ENCODE measurements at regions of chr4 and their contacts with region 1.

Region 1: DNA sequence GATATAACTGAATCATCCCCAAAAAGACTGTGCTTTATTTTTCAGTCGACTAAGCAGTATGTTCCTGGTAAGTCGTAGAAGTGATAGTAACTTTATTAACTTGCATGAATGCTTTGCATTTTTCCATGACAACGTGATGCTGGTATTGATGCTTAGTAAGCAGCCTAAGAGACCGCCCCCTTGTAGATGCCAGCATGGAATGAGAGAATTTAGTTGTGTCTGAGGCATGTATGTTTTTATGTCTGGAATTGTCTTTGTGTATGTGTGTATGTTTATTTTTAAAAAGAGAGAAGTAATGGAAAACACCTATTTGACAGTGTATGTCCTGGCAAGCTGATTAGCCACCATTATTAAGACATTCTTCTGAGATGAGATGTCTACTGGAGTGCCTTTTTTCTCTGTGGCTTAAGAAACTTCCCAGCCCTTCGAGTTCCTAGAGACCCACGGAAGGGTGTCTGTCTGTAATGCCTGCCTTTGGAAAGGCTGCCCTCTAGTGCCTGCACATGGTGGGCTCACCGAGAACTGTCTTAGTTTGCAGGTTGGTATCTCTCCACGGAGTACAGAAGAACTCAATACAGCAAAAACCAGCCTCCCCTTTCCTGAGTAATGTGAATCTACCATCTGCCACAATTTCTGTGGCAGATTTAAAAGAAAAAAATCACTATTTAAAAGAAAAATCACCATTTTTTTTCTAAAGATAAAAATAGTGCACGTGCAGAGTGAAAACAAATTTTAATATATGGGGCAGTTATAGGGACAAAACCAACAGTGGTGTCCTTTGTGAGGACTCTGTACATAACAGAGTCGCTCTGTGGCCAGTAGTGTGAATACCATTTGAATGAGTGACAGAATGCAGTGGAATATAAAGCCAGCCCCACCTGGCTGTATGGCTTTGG is 85.9 kb downstream of the AASDH start:
- DNase-seq: peak; percentile 64 to 81 (median 66)
- ATAC-seq: peak; percentile 99
- H3K4me3 ChIP-seq: no peak overlapping the region
- H3K27ac ChIP-seq: no peak overlapping the region
- H3K4me1 ChIP-seq: no peaks in the 10 kb centered on the region; a peak in 1 of 5 replicates
- H3K27me3 ChIP-seq: peaks cover 20 to 43% of the 10 kb centered on the region in 2 experiments; a peak in 4 of 5 replicates
- CTCF ChIP-seq: peak; percentile 85 to 90 (median 89)
- EP300 ChIP-seq: no peak
- POLR2A ChIP-seq: no peak
- RAD21 ChIP-seq: peak; percentile 88 to 91

Region 2: GRCh38 chr4:55742655-55743202 is 558.7 kb before region 1 on chr4:
- CTCF ChIA-PET with region 1: no interaction called
- POLR2A ChIA-PET with region 1: no interaction called
- in situ Hi-C with region 1: no loop called
- intact Hi-C with region 1: loop called (anchors 5 kb)
- DNase-seq: peak in 2 of 4 experiments; percentile 29 to 74
- ATAC-seq: peak; percentile 82
- H3K4me3 ChIP-seq: no peak overlapping the region
- H3K27ac ChIP-seq: no peak overlapping the region
- H3K4me1 ChIP-seq: peaks cover 7 to 8% of the 10 kb centered on the region in 2 experiments; a peak in 4 of 5 replicates
- H3K27me3 ChIP-seq: no peaks in the 10 kb centered on the region
- CTCF ChIP-seq: no peak
- EP300 ChIP-seq: no peak
- POLR2A ChIP-seq: no peak
- RAD21 ChIP-seq: no peak

Region 3: DNA sequence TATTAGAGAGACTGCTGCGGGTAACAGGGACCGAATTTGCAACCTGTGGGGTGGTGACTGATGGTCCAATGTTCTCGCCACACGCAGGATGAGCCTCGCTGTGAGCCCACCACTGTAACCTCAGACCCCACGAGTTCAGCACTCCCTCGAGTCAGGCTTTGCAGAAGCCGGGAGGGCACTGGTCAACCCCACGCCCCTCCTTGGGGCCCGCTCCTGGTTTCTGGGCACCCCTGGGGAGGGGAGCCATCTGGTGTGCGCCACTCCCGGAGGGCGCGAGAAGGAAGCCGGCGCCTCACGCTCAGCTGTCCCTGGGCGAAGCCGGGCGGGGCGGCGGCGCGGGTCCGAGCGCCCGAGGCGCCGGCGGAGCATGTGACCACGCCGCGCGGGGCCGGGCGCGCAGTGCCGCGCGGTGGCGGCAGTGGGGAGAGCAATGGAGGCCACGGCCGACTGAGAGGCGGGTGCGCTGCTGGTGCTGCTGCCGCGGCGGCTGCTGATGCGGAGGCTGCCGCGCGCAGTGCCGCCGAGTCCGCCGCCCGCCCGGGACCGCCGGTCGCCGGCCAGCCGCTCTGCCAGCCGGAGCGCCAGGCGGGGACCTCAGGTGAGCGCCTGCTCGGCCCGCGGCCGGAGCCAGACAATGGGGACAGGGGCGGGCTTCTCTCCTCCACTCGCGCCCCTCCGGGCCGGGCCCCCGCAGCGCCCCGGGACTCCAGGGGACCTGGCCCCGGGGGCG is 252.6 kb before region 1 on chr4:
- CTCF ChIA-PET with region 1: no interaction called
- POLR2A ChIA-PET with region 1: no interaction called
- in situ Hi-C with region 1: no loop called
- intact Hi-C with region 1: loop called (anchors 5 kb)
- DNase-seq: peak; percentile 60 to 75 (median 68)
- ATAC-seq: peak; percentile 98
- H3K4me3 ChIP-seq: peak overlapping the region; percentile 47
- H3K27ac ChIP-seq: no peak overlapping the region
- H3K4me1 ChIP-seq: peaks cover 0 to 16% of the 10 kb centered on the region in 2 experiments; a peak in 3 of 5 replicates
- H3K27me3 ChIP-seq: peaks cover 15 to 17% of the 10 kb centered on the region in 2 experiments
- CTCF ChIP-seq: peak in 2 of 3 experiments; percentile 62 to 76; a peak in 5 of 6 replicates
- EP300 ChIP-seq: no peak
- POLR2A ChIP-seq: no peak
- RAD21 ChIP-seq: peak in 1 of 2 experiments; percentile 71; a peak in 3 of 4 replicates

Region 4: DNA sequence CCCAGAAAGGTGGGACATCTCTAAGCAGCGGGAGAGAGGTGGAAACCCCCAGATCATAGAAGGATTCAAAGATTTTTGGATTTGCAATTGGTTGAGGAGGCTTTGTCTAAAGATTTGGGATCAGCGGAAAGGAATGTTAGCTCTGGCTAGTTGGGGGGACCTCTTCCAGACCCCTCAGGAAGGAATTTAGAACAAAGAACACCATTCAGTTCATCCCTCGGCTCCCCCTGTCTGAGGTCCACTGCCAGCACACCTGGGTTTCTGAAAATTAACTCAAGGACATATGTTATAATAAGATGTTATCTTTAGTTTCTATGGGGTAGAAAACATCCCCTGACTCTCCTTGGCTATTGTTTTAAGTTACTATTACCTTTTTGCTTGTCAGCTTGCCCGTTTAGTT is 189.1 kb before region 1 on chr4:
- CTCF ChIA-PET with region 1: no interaction called
- POLR2A ChIA-PET with region 1: no interaction called
- in situ Hi-C with region 1: no loop called
- intact Hi-C with region 1: loop called (anchors 10 kb)
- DNase-seq: no peak
- ATAC-seq: no peak
- H3K4me3 ChIP-seq: no peak overlapping the region
- H3K27ac ChIP-seq: no peak overlapping the region
- H3K4me1 ChIP-seq: no peaks in the 10 kb centered on the region
- H3K27me3 ChIP-seq: peaks cover 16 to 20% of the 10 kb centered on the region in 2 experiments
- CTCF ChIP-seq: no peak
- EP300 ChIP-seq: no peak
- POLR2A ChIP-seq: no peak
- RAD21 ChIP-seq: no peak